Activated CD4-positive, alpha-beta T cell treated with anti-CD3 and anti-CD28 coated beads for 36 hours (primary cell): ENCODE measurements at regions of chr15 and their contacts with region 1.

Region 1: DNA sequence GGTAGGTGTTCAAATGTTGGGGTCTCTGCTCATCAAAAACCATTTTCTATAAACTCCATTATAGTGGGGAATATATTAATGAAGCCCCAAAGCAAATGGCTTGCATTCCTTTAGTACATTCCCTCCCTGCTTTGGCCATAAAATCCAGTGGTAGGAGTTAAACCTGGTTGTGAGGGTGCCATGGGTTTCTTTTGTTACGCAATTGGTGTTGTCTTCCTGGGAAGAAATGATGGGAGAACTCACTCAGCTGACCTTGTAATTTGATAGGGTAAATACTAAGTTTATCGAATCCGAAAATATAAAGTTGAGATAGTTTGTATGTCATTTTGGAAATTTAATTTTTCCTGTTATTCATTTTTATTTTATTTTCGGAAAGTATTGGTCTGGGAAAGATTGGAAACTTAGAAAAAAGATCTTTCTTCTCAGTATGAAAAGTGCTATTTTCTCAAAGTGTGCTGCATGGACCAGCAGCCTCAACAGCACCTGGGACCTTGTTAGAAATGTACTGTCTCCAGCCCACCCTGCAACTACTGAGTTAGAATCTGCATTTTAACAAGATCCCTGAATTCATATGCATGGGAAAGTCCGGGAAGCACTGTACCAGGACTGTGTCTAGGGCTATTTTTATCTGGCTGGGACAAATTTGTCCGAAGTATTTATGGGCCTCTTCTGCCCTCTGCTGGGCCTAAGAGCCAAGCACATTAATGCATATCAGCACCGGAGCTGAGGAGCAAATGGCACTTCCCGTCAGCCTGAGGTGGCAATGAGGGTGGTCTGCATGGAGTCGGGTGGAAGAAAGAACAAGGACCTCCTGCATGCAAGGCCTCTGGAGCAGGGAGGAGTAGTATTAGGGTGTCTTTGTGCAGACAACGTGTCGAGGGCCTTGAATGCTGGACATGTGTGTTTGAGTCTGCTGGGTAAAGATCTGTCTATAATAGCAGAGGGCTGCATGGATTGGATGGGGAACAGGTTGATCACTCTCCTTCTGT is 54.7 kb downstream of the FAM81A start:
- DNase-seq: peak; percentile 65
- ATAC-seq: peak; percentile 74
- H3K4me3 Mint-ChIP-seq: no peak overlapping the region
- H3K27ac Mint-ChIP-seq: no peak overlapping the region
- H3K4me1 Mint-ChIP-seq: no peaks in the 10 kb centered on the region
- H3K27me3 Mint-ChIP-seq: peaks cover 4% of the 10 kb centered on the region

Region 2: DNA sequence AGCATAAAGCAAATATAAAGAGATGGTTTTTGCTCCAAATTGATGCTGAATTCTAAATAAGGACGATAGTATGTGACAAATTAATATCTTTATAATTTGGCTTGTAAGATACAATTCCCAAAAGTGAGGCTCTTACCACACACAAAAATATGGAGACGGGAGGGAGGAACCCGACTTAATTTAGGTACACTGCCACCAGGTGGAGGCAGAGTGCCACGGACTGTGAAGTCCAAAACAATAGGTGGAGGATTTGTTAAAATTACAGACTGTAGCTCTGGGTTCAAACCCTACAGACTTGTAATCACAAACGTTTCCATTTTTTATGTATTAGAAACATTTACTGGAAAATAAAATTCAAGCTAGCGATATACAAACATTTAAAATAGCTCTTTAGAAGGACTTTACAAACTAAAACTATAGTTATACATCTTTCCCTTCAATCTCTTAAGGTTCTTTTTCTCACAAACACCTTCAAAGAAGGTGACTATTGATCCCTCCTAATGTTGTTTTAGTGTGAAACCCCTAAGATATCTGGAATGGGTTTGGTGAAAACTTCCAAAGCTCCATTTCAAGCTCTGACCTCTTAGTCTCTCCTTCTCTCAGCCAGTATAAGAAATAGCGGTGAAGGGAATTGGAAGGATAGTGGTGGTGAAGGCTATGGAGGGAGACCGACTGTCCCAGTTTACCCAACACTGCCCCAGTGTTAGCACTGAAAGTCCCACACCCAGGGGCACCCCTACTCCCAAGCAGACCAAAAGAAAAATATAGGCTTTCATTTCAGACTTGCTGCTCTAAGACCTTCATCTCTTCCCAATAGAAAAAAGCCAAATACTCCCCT is 1264.8 kb before region 1 on chr15:
- CTCF ChIA-PET with region 1: interaction called, 3 read pairs
- POLR2A ChIA-PET with region 1: no interaction called
- intact Hi-C with region 1: loop called in 1 of 2 experiments (anchors 5 kb)
- DNase-seq: peak; percentile 84
- ATAC-seq: peak; percentile 64
- H3K4me3 Mint-ChIP-seq: no peak overlapping the region
- H3K27ac Mint-ChIP-seq: no peak overlapping the region
- H3K4me1 Mint-ChIP-seq: peaks cover 9% of the 10 kb centered on the region
- H3K27me3 Mint-ChIP-seq: peaks cover 2% of the 10 kb centered on the region

Region 3: GRCh38 chr15:58980351-58980939 is 512.2 kb before region 1 on chr15:
- CTCF ChIA-PET with region 1: interaction called, 7 read pairs
- POLR2A ChIA-PET with region 1: no interaction called
- intact Hi-C with region 1: loop called (anchors 1 kb)
- DNase-seq: no peak
- ATAC-seq: no peak
- H3K4me3 Mint-ChIP-seq: no peak overlapping the region
- H3K27ac Mint-ChIP-seq: no peak overlapping the region
- H3K4me1 Mint-ChIP-seq: peaks cover 39% of the 10 kb centered on the region
- H3K27me3 Mint-ChIP-seq: no peaks in the 10 kb centered on the region

Region 4: DNA sequence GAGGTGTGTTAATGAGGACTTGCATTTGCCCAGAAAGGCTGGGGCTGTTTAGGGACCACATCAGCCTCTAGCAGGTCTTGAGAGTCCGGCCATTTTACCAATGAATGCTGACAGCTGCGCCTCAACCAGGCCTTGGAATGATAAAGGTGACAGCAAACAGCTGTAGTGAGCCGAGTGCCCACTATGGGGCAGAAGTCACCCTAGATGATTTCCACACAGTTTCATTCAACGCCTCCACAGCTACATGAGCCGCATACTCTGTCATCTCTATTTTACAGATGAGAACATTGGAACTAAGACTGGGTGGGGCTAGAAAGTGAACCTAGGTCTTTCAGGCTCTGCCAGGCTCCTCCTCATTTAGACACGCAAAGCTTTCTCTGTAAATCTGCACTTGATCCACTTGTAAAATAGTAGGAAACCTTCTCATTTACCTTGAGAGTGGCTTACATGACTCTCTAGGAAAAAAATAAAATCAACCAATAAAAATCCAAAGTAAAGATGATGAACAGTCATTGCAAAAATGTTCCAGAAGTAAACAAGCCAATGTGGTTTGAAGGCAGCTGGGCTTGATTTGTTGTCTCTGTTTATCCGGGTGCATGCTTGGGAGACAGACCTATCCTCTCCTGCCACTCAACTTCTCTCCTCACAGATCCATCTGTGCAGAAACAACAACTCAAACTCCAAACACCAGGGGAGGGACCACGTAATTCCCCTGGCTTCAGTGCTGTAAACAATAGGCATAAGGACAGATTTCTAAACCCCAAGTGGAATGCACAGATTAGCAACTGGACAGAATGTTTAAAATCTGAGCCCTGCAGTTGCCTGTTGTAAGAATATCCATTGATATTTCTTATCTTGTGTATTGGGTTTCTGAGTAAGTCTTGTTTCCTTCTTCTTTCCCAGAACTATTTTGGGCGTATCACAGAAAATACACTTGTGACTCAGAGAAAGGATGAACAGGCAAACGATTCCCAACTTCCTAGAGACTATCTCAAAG is 317.6 kb before region 1 on chr15:
- CTCF ChIA-PET with region 1: interaction called, 8 read pairs
- POLR2A ChIA-PET with region 1: no interaction called
- intact Hi-C with region 1: loop called (anchors 1 to 5 kb)
- DNase-seq: peak; percentile 72
- ATAC-seq: peak; percentile 95
- H3K4me3 Mint-ChIP-seq: no peak overlapping the region
- H3K27ac Mint-ChIP-seq: no peak overlapping the region
- H3K4me1 Mint-ChIP-seq: peaks cover 8% of the 10 kb centered on the region
- H3K27me3 Mint-ChIP-seq: peaks cover 17% of the 10 kb centered on the region

Region 5: GRCh38 chr15:59208850-59209249 is 283.8 kb before region 1 on chr15:
- CTCF ChIA-PET with region 1: no interaction called
- POLR2A ChIA-PET with region 1: no interaction called
- intact Hi-C with region 1: no loop called
- DNase-seq: no peak
- ATAC-seq: no peak
- H3K4me3 Mint-ChIP-seq: no peak overlapping the region
- H3K27ac Mint-ChIP-seq: no peak overlapping the region
- H3K4me1 Mint-ChIP-seq: no peaks in the 10 kb centered on the region
- H3K27me3 Mint-ChIP-seq: no peaks in the 10 kb centered on the region

Region 6: GRCh38 chr15:59299929-59300617 is 192.6 kb before region 1 on chr15:
- CTCF ChIA-PET with region 1: no interaction called
- POLR2A ChIA-PET with region 1: interaction called, 15 read pairs
- intact Hi-C with region 1: no loop called
- DNase-seq: peak; percentile 82
- ATAC-seq: peak; percentile 86
- H3K4me3 Mint-ChIP-seq: peak overlapping the region; percentile 38
- H3K27ac Mint-ChIP-seq: peak overlapping the region; percentile 48
- H3K4me1 Mint-ChIP-seq: peaks cover 39% of the 10 kb centered on the region
- H3K27me3 Mint-ChIP-seq: no peaks in the 10 kb centered on the region